ENCODE measurements at regions of chr4 and their contacts with region 1.

Region 1: GRCh38 chr4:76117536-76117935 is 30.7 kb downstream of the NUP54 start:
- DNase-seq: no peak
- ATAC-seq: no peak
- H3K4me3 ChIP-seq: no peak overlapping the region
- H3K27ac ChIP-seq: no peak overlapping the region
- H3K4me1 ChIP-seq: no peaks in the 10 kb centered on the region
- H3K27me3 ChIP-seq: no peaks in the 10 kb centered on the region
- CTCF ChIP-seq: no peak

Region 2: DNA sequence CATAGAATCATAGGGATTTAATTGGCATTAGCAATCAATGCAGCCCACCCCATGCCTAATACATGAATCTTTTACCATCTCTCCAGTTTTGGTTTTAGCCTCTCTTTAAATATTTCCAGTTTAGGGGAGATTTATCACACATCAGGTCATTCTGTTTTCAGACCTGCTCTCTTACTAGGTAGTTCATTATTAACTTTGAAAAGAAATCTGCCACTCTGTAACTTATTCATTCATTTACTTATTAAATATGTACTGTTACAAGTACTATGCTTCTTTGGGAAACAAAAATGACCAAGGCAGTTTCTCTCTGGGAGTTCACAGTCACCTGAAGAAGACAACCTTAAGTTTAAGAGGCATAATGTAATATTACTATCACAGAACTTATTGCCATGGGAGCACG is 331.0 kb before region 1 on chr4:
- intact Hi-C with region 1: loop called in 1 of 2 experiments (anchors 10 kb)
- DNase-seq: no peak
- ATAC-seq: no peak
- H3K4me3 ChIP-seq: no peak overlapping the region
- H3K27ac ChIP-seq: no peak overlapping the region
- H3K4me1 ChIP-seq: no peaks in the 10 kb centered on the region
- H3K27me3 ChIP-seq: no peaks in the 10 kb centered on the region
- CTCF ChIP-seq: no peak

Measured in psoas muscle (tissue), 8 donors.